ENCODE measurements at regions of chr4 and their contacts with region 1.

Region 1: DNA sequence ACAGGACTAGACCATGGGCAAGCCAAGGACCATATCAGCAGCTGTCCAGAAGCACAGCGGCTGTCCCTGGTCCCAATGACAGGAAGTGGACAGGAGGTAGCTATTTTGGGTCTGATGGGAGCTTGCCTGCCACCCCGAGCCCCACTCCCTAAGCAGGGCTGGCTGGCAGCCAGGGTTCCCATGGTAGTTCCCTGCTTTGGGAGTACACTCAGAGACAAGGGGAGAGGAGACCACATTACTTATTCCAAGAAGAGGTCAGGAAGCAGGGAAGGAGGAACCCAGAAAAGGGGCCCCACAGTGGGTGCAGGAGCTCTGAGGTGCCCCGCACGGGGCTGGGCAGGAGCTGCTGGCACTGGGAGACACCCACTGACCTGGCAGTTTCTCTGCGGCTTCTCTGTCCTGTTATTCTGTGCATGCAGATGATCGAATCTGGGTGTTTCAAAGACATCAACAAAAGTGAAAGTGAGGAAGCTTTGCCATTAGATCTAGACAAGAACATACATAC is 36.3 kb downstream of the HTT-AS start:
- DNase-seq: no peak

Region 2: DNA sequence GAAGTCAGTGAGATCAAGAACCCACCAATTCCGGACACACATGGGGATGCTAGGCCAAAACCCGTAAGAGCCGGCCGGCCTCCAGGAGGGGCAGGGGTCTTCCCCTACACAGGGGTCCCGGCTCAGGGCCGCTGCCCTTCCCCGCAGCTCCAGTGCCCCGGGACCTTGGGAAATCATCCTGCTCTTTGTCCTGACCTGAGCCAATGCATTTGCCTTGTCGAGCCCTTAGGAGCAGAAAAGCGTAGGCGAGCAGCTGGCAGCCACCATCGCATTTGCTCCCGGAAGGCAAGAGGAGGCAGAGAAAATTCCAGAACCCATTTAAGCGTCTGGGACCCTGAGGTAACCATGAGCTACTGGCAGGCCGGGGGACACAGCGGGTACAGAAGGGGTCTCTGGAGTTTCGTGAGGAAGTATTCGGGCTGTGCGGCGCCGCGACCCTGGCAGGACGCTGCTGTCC is 274.5 kb before region 1 on chr4:
- CTCF ChIA-PET with region 1: interaction called, 11 read pairs
- POLR2A ChIA-PET with region 1: no interaction called
- DNase-seq: no peak

Region 3: GRCh38 chr4:3106339-3107186 is 68.6 kb after region 1 on chr4:
- CTCF ChIA-PET with region 1: no interaction called
- POLR2A ChIA-PET with region 1: no interaction called
- DNase-seq: peak; percentile 92